Psoas muscle (tissue), 8 donors: ENCODE measurements at regions of chr10 and their contacts with region 1.

Region 1: GRCh38 chr10:63629363-63630084 is 108.3 kb downstream of the REEP3 start:
- DNase-seq: peak; percentile 95 to 97
- ATAC-seq: peak; percentile 83 to 88 (median 84)
- H3K4me3 ChIP-seq: peak overlapping the region; percentile 79
- H3K27ac ChIP-seq: peak overlapping the region; percentile 95
- H3K4me1 ChIP-seq: peaks cover 13% of the 10 kb centered on the region
- H3K27me3 ChIP-seq: no peaks in the 10 kb centered on the region
- CTCF ChIP-seq: peak; percentile 64

Region 2: DNA sequence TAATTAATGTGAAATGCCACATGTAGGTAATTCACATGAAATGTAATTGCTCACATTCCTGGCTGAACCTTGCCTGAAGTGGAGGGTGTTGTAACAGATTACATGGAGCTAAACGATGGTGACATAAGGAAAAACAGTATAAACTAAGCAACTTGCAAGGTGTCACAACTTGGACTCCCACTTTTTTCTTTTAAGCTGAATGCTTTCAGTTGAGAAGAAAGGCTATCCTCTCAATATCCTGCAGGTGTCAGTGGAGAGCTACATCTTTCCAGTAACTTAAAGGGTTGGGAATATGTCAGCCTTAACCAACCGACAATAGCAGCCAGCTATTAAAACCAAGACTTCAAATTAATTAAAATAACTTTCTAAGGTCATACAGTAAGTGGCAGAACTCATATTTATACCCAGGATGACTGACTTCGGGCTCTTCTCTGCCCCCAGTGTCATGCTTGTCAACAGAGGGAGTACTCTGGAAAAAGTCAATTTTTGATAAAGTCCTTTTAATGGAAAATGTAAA is 462.7 kb before region 1 on chr10:
- intact Hi-C with region 1: loop called in 1 of 2 experiments (anchors 5 kb)
- DNase-seq: no peak
- ATAC-seq: peak; percentile 65 to 84 (median 76)
- H3K4me3 ChIP-seq: no peak overlapping the region
- H3K27ac ChIP-seq: no peak overlapping the region
- H3K4me1 ChIP-seq: peaks cover 12% of the 10 kb centered on the region
- H3K27me3 ChIP-seq: no peaks in the 10 kb centered on the region
- CTCF ChIP-seq: peak; percentile 79

Region 3: DNA sequence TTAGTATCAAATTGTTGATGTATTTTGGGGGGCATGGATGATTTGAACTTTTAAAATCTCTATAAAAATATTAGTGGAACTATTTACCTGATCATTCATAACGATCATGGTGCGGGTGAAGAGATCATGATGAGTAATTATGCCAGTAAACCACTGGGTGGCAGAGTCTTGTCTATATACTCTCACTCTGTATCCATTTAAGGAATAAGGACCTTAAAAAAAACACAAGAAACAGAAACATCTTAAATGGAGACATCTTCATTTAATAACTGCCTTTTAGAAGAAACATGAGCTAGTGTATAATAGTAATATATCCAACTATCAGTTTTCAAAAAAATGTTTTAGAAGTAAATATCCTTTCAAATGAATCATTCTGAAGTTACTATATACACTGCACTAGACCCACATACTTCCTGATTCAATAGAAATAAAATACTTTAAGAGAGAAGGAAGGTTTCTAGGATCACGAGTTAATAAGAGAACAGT is 412.4 kb before region 1 on chr10:
- intact Hi-C with region 1: loop called (anchors 5 to 10 kb)
- DNase-seq: no peak
- ATAC-seq: peak; percentile 62 to 88 (median 78)
- H3K4me3 ChIP-seq: no peak overlapping the region
- H3K27ac ChIP-seq: no peak overlapping the region
- H3K4me1 ChIP-seq: peaks cover 3% of the 10 kb centered on the region
- H3K27me3 ChIP-seq: no peaks in the 10 kb centered on the region
- CTCF ChIP-seq: peak; percentile 72

Region 4: GRCh38 chr10:63268798-63269503 is 360.6 kb before region 1 on chr10:
- intact Hi-C with region 1: loop called (anchors 5 kb)
- DNase-seq: peak; percentile 65 to 84
- ATAC-seq: peak; percentile 95 to 99 (median 96)
- H3K4me3 ChIP-seq: peak overlapping the region; percentile 86
- H3K27ac ChIP-seq: peak overlapping the region; percentile 98
- H3K4me1 ChIP-seq: peaks cover 14% of the 10 kb centered on the region
- H3K27me3 ChIP-seq: no peaks in the 10 kb centered on the region
- CTCF ChIP-seq: peak; percentile 47

Region 5: GRCh38 chr10:63465293-63466143 is 164.0 kb before region 1 on chr10 and contains the start of gene JMJD1C:
- intact Hi-C with region 1: loop called in 1 of 2 experiments (anchors 5 kb)
- DNase-seq: peak; percentile 88 to 90
- ATAC-seq: peak; percentile 90 to 93 (median 90)
- H3K4me3 ChIP-seq: peak within 1 kb of the TSS; percentile 81
- H3K27ac ChIP-seq: peak within 1 kb of the TSS; percentile 92
- H3K4me1 ChIP-seq: peaks cover 27% of the 10 kb centered on the region
- H3K27me3 ChIP-seq: no peaks in the 10 kb centered on the region
- CTCF ChIP-seq: peak; percentile 2
- total RNA-seq, gene JMJD1C: 23.3 to 74.4 (median 30.3) TPM

Region 6: GRCh38 chr10:63521416-63522276 is 107.9 kb before region 1 on chr10:
- intact Hi-C with region 1: loop called in 1 of 2 experiments (anchors 10 kb)
- DNase-seq: peak; percentile 76 to 86
- ATAC-seq: peak; percentile 84 to 87 (median 86)
- H3K4me3 ChIP-seq: peak overlapping the region; percentile 83
- H3K27ac ChIP-seq: peak overlapping the region; percentile 98
- H3K4me1 ChIP-seq: peaks cover 53% of the 10 kb centered on the region
- H3K27me3 ChIP-seq: no peaks in the 10 kb centered on the region
- CTCF ChIP-seq: no peak